ENCODE measurements at regions of chr17 and their contacts with region 1.

Region 1: GRCh38 chr17:28967221-28968140 is 16.2 kb upstream of the PHF12 start:
- DNase-seq: no peak
- H3K4me3 Mint-ChIP-seq: no peak overlapping the region
- H3K27ac Mint-ChIP-seq: no peak overlapping the region
- H3K4me1 Mint-ChIP-seq: no peaks in the 10 kb centered on the region
- H3K27me3 Mint-ChIP-seq: peaks cover 10% of the 10 kb centered on the region

Region 2: GRCh38 chr17:28902819-28903545 is 64.5 kb before region 1 on chr17 and contains the start of gene DHRS13:
- intact Hi-C with region 1: no loop called
- DNase-seq: peak; percentile 93
- H3K4me3 Mint-ChIP-seq: peak within 1 kb of the TSS; percentile 91
- H3K27ac Mint-ChIP-seq: peak within 1 kb of the TSS; percentile 79
- H3K4me1 Mint-ChIP-seq: peaks cover 39% of the 10 kb centered on the region
- H3K27me3 Mint-ChIP-seq: no peaks in the 10 kb centered on the region
- total RNA-seq, gene DHRS13: 34.6 and 34.9 TPM in 2 replicates

Region 3: GRCh38 chr17:29111816-29112499 is 144.5 kb after region 1 on chr17:
- intact Hi-C with region 1: loop called (anchors 1 kb)
- DNase-seq: peak; percentile 41
- H3K4me3 Mint-ChIP-seq: no peak overlapping the region
- H3K27ac Mint-ChIP-seq: no peak overlapping the region
- H3K4me1 Mint-ChIP-seq: no peaks in the 10 kb centered on the region
- H3K27me3 Mint-ChIP-seq: no peaks in the 10 kb centered on the region

Region 4: GRCh38 chr17:29116804-29117772 is 149.6 kb after region 1 on chr17:
- intact Hi-C with region 1: loop called (anchors 1 kb)
- DNase-seq: peak; percentile 59
- H3K4me3 Mint-ChIP-seq: no peak overlapping the region
- H3K27ac Mint-ChIP-seq: no peak overlapping the region
- H3K4me1 Mint-ChIP-seq: no peaks in the 10 kb centered on the region
- H3K27me3 Mint-ChIP-seq: no peaks in the 10 kb centered on the region

Measured in activated T-helper 1 cell treated with anti-CD3 and anti-CD28 coated beads, Interleukin-12 subunit alpha, Interleukin-12 subunit beta, Interleukin-2, Interleukin-4 antibody, amounts not matched to agents 30 ng/mL and 10 ng/mL and 1 ng/mL, durations not matched to agents 14 hours and 24 hours and 36 hours (primary cell).